ENCODE measurements at regions of chr11 and their contacts with region 1.

Region 1: GRCh38 chr11:63738720-63739360 is 29.7 kb downstream of the ZFTA start:
- DNase-seq: peak in 1 of 2 donors; percentile 71
- ATAC-seq: peak; percentile 90
- H3K4me3 ChIP-seq: no peak overlapping the region
- H3K27ac ChIP-seq: no peak overlapping the region
- H3K4me1 ChIP-seq: no peaks in the 10 kb centered on the region
- H3K27me3 ChIP-seq: no peaks in the 10 kb centered on the region

Region 2: GRCh38 chr11:63478896-63479295 is 259.9 kb before region 1 on chr11:
- intact Hi-C with region 1: loop called (anchors 5 kb)
- DNase-seq: peak in 1 of 2 donors; percentile 56
- ATAC-seq: peak; percentile 81
- H3K4me3 ChIP-seq: no peak overlapping the region
- H3K27ac ChIP-seq: no peak overlapping the region
- H3K4me1 ChIP-seq: no peaks in the 10 kb centered on the region
- H3K27me3 ChIP-seq: no peaks in the 10 kb centered on the region

Region 3: GRCh38 chr11:63641727-63642126 is 97.1 kb before region 1 on chr11:
- intact Hi-C with region 1: loop called (anchors 5 kb)
- DNase-seq: no peak
- ATAC-seq: no peak
- H3K4me3 ChIP-seq: no peak overlapping the region
- H3K27ac ChIP-seq: no peak overlapping the region
- H3K4me1 ChIP-seq: no peaks in the 10 kb centered on the region
- H3K27me3 ChIP-seq: no peaks in the 10 kb centered on the region

Region 4: DNA sequence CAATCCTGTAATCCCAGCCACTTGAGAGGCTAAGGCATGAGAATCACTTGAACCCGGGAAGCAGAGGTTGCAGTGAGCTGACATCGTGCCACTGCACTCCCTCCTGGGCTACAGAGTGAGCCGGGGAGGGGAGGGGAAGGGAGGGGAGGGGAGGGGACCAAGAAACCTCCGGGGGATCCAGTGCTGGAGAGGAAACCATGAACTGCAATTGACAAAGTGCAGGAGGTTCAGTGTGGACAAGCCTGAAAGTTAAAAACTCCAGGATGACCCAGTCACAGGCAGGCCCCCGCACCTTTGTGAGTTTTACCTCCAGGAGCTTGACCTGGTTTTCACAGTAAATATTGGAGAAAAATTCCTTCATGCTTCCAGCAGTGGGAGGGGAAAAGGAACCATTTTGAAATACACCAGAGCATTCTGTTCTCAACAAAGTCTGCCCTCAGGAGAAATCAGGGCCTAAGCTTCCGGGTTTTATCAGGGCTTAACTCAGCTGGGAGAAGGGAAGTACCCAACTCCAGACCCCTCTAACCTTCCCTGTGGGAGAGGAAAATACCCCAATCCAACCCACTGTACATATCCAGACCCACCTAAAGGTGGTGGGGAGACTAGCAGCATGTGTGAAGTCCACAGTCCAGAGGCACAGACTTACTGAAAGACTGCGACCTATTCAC is 45.2 kb after region 1 on chr11:
- intact Hi-C with region 1: no loop called
- DNase-seq: peak in 1 of 2 donors; percentile 16
- ATAC-seq: no peak
- H3K4me3 ChIP-seq: no peak overlapping the region
- H3K27ac ChIP-seq: no peak overlapping the region
- H3K4me1 ChIP-seq: no peaks in the 10 kb centered on the region
- H3K27me3 ChIP-seq: no peaks in the 10 kb centered on the region